Left cardiac atrium (tissue), 4 donors: ENCODE measurements at regions of chr4 and their contacts with region 1.

Region 1: DNA sequence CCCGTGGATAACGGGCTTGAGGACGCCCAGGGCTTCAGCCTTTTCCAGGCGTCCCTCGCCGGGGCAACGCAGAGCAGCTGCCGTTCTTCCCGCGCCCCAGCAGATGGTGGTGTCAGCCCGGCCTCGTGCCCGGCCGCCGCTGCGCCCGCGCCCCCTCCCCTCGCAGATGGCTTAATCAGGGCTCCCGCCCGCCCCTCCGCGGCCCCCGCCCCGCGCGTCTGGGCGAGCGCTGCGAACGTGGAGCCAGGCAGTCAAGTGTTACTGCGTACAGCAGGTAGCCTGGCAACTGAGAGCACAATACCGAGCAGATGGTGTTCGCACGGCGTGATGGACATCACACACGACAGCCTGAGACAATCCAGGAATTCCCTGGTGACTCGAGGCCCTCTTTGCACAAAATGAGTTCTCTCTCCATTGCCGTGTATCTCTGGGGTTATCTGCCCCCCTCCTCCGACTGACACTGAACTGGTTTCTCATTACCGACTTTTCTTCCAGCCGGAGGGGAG is 69.3 kb downstream of the MGST2 start:
- DNase-seq: peak; percentile 92
- ATAC-seq: peak; percentile 93 to 96

Region 2: GRCh38 chr4:139682741-139683151 is 52.2 kb before region 1 on chr4:
- intact Hi-C with region 1: no loop called
- DNase-seq: peak; percentile 41
- ATAC-seq: peak; percentile 43 to 60

Region 3: DNA sequence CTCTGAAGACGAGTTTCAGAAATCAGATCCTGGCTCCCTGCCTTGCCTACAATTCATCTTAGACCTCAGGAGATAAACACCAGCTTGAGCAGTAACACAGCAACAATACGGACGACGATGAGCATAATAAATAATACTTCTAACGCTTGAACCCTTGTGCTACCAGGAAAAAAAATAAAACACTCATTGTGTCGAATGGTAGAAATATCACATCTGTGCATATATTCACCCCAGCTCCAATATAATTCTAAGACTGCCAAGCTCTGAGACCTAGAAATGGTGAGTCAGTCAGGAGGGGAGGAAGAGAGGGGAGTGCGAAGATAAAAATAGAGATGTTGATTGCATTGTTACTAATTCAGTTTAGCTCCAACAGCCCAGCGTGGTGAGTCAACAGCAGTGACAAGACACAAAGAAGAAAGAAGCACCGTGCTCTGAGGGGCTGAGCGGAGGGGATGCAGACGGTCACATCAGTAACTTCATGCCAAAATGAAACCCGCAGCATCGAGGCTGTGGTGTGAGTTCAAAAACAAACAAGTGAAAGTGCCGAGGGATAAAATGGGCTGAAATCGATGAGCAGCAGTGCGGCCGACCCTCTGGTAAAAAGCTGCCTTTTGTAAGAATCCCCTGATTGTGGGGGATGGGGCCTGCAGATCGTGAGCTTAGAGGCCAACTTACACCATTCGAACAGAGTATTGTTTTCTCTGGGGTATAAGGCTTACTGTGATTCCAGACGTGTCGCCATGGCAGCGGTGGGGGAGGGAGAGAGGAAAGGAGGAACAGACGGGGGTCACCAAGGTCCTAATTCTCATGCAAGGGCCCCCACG is 81.1 kb after region 1 on chr4:
- intact Hi-C with region 1: loop called in 1 of 2 experiments (anchors 10 kb)
- DNase-seq: peak; percentile 61
- ATAC-seq: peak; percentile 86 to 95

Region 4: GRCh38 chr4:139919521-139919920 is 184.6 kb after region 1 on chr4:
- intact Hi-C with region 1: loop called in 1 of 2 experiments (anchors 10 kb)
- DNase-seq: no peak
- ATAC-seq: peak; percentile 83 to 85

Region 5: DNA sequence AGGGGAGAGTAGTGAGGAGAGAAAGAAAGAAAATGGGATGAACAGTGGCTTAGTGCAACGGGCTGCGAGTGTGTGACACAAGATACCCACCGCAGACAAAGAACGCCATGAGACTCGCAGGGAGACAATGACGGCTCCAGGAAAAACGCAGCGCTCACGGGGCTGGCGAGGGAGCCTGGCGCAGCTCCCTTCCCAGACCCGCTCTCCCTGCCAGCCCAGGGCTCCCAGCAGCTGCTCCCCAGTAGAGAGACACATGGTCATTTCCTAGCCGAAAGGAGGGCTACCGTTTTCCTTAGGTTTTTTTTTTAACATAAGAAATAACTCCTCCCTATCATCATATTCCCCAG is 269.6 kb after region 1 on chr4:
- intact Hi-C with region 1: loop called (anchors 10 kb)
- DNase-seq: peak; percentile 61
- ATAC-seq: peak; percentile 92 to 96

Region 6: GRCh38 chr4:140049024-140049848 is 314.3 kb after region 1 on chr4:
- intact Hi-C with region 1: loop called in 1 of 2 experiments (anchors 5 kb)
- DNase-seq: peak; percentile 33
- ATAC-seq: peak; percentile 82 to 83

Region 7: GRCh38 chr4:140153718-140154571 is 419.0 kb after region 1 on chr4 and contains the start of gene MAML3:
- intact Hi-C with region 1: loop called (anchors 2 to 5 kb)
- DNase-seq: peak; percentile 96
- ATAC-seq: peak; percentile 62 to 63
- total RNA-seq, gene MAML3: 2.6 to 3.0 TPM

Region 8: GRCh38 chr4:140252742-140253555 is 518.0 kb after region 1 on chr4:
- intact Hi-C with region 1: loop called (anchors 2 to 5 kb)
- DNase-seq: peak; percentile 76
- ATAC-seq: peak; percentile 88 to 92